Psoas muscle (tissue), 8 donors: ENCODE measurements at regions of chr1 and their contacts with region 1.

Region 1: DNA sequence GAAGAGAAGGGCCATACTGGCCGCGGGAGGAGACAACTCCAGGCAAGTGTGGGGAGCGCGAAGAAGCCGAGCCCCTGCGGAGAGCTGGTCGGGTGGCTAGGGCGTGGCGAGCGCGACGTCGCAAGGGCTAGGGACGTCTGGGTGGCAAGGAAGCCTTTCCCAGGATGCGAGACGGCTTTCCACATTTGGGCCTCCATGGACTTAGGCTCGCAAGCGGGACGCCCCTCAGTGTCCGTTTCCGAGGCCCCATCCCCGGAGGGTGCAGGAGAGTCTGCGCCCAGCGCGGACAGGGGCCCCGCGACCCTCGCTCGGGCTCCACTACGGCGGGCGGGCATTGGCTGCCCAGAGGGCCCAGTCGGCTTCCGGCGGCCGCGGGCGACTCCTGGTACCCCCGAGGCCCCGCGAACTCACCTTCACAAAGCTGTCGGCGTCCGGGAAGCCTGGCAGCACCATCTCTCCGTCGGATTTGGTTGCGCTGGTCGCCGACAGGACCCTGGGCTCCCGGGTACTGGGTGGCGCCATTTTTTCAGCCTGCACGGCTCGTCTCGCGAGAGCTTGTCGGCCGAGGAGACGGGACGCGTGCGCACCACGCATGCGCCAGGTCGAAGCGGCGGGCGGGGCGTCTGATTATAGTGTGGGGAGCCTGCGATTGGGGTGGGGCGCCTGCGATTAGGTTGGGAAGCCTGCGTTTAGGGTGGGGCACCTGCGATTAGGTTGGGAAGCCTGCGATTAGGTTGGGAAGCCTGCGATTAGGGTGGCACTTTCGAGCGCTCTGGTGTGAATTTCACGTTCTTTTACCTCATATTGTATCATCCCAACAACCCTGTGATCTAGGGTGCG is at the start of gene EXOSC10:
- DNase-seq: peak; percentile 94 to 97
- ATAC-seq: peak; percentile 97 to 100 (median 99)
- H3K4me3 ChIP-seq: peak within 1 kb of the TSS; percentile 99
- H3K27ac ChIP-seq: peak within 1 kb of the TSS; percentile 82
- H3K4me1 ChIP-seq: peaks cover 11% of the 10 kb centered on the region
- H3K27me3 ChIP-seq: no peaks in the 10 kb centered on the region
- CTCF ChIP-seq: no peak
- total RNA-seq, gene EXOSC10: 16.3 to 34.8 (median 25.7) TPM

Region 2: GRCh38 chr1:11045428-11046269 is 53.9 kb before region 1 on chr1:
- intact Hi-C with region 1: no loop called
- DNase-seq: no peak
- ATAC-seq: no peak
- H3K4me3 ChIP-seq: no peak overlapping the region
- H3K27ac ChIP-seq: no peak overlapping the region
- H3K4me1 ChIP-seq: no peaks in the 10 kb centered on the region
- H3K27me3 ChIP-seq: peaks cover 0 to 2% (median 0%) of the 10 kb centered on the region in 3 donors
- CTCF ChIP-seq: no peak

Region 3: GRCh38 chr1:11151826-11152612 is 52.5 kb after region 1 on chr1:
- intact Hi-C with region 1: loop called in 1 of 2 experiments (anchors 5 kb)
- DNase-seq: no peak
- ATAC-seq: no peak
- H3K4me3 ChIP-seq: no peak overlapping the region
- H3K27ac ChIP-seq: no peak overlapping the region
- H3K4me1 ChIP-seq: peaks cover 9% of the 10 kb centered on the region
- H3K27me3 ChIP-seq: no peaks in the 10 kb centered on the region
- CTCF ChIP-seq: no peak